ENCODE measurements at regions of chr5 and their contacts with region 1.

Region 1: DNA sequence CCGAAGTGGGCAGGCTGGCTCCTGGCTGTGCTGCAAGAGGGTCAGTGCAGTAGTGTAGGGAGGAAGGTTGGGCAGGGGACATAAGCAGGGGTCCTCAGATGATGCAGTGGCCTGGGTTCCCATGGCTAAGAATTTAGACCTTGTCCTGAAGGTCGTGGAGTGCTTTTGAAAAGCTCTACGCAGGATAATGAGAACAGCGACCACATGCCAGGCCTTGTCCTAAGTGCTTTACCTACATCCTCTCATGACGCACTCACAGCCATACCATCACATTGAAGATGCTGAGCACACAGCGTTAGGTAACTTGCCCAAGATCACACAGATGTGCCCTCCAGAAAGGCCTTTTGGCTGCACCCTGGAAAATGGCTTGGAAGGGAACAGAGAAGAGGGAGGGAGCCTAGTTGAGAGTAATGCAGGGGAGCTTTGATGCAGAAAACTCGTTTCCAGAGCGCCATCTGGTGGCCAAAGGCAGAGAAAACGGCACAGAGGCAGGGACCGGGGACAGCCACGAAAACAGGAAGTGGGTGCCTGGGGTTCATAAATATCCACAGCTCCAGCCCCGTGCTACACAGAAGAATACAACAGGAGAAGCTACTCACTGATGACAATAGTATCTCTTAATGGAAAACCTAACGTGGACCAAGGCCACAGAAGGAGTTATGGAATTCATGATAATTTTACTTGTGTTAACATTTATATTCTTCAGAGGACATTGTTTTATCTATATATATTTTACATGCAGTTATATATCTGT is 2.6 kb upstream of the PCDH12 start:
- DNase-seq: peak; percentile 88
- H3K4me3 ChIP-seq: no peak overlapping the region
- H3K27ac ChIP-seq: no peak overlapping the region
- H3K4me1 ChIP-seq: peaks cover 31% of the 10 kb centered on the region
- H3K27me3 ChIP-seq: no peaks in the 10 kb centered on the region
- CTCF ChIP-seq: peak; percentile 80 to 86
- POLR2A ChIP-seq: no peak

Region 2: GRCh38 chr5:141664732-141665461 is 295.7 kb before region 1 on chr5:
- CTCF ChIA-PET with region 1: interaction called, 32 read pairs
- POLR2A ChIA-PET with region 1: no interaction called
- dilution Hi-C with region 1: no loop called
- intact Hi-C with region 1: no loop called
- DNase-seq: peak; percentile 73
- H3K4me3 ChIP-seq: no peak overlapping the region
- H3K27ac ChIP-seq: no peak overlapping the region
- H3K4me1 ChIP-seq: peaks cover 4% of the 10 kb centered on the region
- H3K27me3 ChIP-seq: no peaks in the 10 kb centered on the region
- CTCF ChIP-seq: peak; percentile 85 to 90
- POLR2A ChIP-seq: no peak

Region 3: DNA sequence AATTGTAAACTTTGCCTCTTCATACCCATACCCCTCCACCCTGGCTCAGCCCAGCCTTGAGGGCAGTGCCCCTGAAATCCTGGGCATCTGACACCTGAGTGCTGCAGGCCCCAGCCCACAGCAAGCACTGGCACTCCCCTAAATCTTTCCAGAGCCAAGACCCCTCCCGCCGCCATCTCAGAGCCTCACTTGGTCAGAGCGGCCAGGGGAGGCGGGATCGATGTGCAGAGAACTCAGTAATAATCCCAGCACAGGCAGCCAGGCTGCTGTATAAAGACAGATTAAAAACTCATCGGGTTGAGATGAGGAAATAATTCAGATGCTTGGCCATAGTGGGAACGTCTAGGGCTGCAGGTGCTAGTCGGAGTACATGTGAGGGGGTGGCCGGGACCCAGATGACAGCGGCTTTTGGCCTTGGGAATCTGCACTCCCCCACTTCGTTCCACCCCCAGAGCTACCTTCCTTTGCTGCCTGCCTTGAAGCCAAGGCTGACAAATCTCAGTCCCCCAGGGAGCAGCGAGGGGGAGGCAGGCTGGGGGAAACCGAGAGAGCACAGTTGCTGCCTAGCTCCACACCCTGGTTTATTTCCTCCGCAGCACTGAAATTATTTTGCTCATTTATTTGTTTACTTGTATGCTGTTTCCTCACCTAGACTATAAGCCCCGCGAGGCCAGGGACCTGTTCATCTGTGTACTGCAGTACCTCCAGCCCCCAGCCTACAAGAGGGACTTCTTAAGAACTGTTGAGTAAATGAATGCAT is 259.1 kb before region 1 on chr5:
- CTCF ChIA-PET with region 1: interaction called, 282 read pairs
- POLR2A ChIA-PET with region 1: no interaction called
- dilution Hi-C with region 1: no loop called
- intact Hi-C with region 1: loop called (anchors 1 kb)
- DNase-seq: no peak
- H3K4me3 ChIP-seq: no peak overlapping the region
- H3K27ac ChIP-seq: no peak overlapping the region
- H3K4me1 ChIP-seq: peaks cover 5% of the 10 kb centered on the region
- H3K27me3 ChIP-seq: peaks cover 19 to 33% of the 10 kb centered on the region in 2 experiments
- CTCF ChIP-seq: no peak
- POLR2A ChIP-seq: no peak

Region 4: GRCh38 chr5:141816598-141817372 is 143.8 kb before region 1 on chr5:
- CTCF ChIA-PET with region 1: interaction called, 6 read pairs
- POLR2A ChIA-PET with region 1: no interaction called
- dilution Hi-C with region 1: no loop called
- intact Hi-C with region 1: loop called (anchors 5 kb)
- DNase-seq: peak; percentile 81
- H3K4me3 ChIP-seq: no peak overlapping the region
- H3K27ac ChIP-seq: peak overlapping the region; percentile 74
- H3K4me1 ChIP-seq: peaks cover 24% of the 10 kb centered on the region
- H3K27me3 ChIP-seq: no peaks in the 10 kb centered on the region
- CTCF ChIP-seq: no peak
- POLR2A ChIP-seq: no peak

Region 5: DNA sequence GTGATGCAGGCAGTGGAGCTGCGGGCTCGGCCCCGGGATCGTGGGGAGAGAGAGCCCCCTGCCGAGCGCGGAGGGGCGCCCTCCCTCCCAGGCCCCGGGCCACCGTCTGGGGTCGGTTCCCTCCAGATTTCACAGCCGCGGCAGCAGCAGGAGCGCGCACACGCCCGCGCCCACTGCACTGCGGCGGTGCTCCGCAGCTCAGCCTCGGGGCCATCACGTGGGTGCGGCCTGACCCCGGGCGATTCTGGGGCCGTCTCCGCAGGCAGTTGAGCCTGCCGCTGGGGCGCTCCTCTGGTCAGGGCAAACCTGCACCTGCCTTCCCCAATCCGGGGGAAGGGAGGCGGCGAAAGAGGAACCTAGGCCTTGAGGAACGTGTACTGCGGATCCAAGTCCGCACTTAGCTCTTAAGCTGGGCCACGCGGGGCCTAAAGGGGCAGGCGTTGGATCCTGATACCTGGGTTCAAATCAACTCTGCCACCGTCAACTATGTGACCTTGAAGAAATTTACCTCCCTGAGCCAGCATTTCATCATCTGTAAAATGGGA is 46.4 kb before region 1 on chr5:
- CTCF ChIA-PET with region 1: interaction called, 36 read pairs
- POLR2A ChIA-PET with region 1: no interaction called
- dilution Hi-C with region 1: no loop called
- intact Hi-C with region 1: no loop called
- DNase-seq: peak; percentile 9
- H3K4me3 ChIP-seq: peak overlapping the region in 1 of 3 experiments; percentile 20
- H3K27ac ChIP-seq: no peak overlapping the region
- H3K4me1 ChIP-seq: peaks cover 3% of the 10 kb centered on the region
- H3K27me3 ChIP-seq: peaks cover 9 to 14% of the 10 kb centered on the region in 2 experiments
- CTCF ChIP-seq: peak in 1 of 2 donors; percentile 43
- POLR2A ChIP-seq: no peak

Region 6: GRCh38 chr5:141940695-141941271 is 19.8 kb before region 1 on chr5:
- CTCF ChIA-PET with region 1: interaction called, 244 read pairs
- POLR2A ChIA-PET with region 1: interaction called, 3 read pairs
- dilution Hi-C with region 1: no loop called
- intact Hi-C with region 1: loop called (anchors 1 kb)
- DNase-seq: no peak
- H3K4me3 ChIP-seq: no peak overlapping the region
- H3K27ac ChIP-seq: peak overlapping the region; percentile 19
- H3K4me1 ChIP-seq: peaks cover 27% of the 10 kb centered on the region
- H3K27me3 ChIP-seq: no peaks in the 10 kb centered on the region
- CTCF ChIP-seq: peak; percentile 5 to 30
- POLR2A ChIP-seq: no peak

Measured in endothelial cell of umbilical vein (primary cell).